Caco-2 (cell line): ENCODE measurements at regions of chr1 and their contacts with region 1.

Region 1: GRCh38 chr1:32072622-32073298 is at the start of gene TMEM39B:
- DNase-seq: peak; percentile 88 to 89
- H3K4me3 ChIP-seq: peak within 1 kb of the TSS; percentile 79
- H3K4me3 Mint-ChIP-seq: peak within 1 kb of the TSS; percentile 88
- H3K27ac Mint-ChIP-seq: peak within 1 kb of the TSS; percentile 76
- H3K4me1 ChIP-seq: no peaks in the 10 kb centered on the region
- H3K4me1 Mint-ChIP-seq: peaks cover 16% of the 10 kb centered on the region
- H3K27me3 ChIP-seq: no peaks in the 10 kb centered on the region
- H3K27me3 Mint-ChIP-seq: no peaks in the 10 kb centered on the region
- CTCF ChIP-seq: peak in 1 of 2 experiments; percentile 13
- total RNA-seq, gene TMEM39B: 9.8 and 12.1 TPM in 2 replicates

Region 2: DNA sequence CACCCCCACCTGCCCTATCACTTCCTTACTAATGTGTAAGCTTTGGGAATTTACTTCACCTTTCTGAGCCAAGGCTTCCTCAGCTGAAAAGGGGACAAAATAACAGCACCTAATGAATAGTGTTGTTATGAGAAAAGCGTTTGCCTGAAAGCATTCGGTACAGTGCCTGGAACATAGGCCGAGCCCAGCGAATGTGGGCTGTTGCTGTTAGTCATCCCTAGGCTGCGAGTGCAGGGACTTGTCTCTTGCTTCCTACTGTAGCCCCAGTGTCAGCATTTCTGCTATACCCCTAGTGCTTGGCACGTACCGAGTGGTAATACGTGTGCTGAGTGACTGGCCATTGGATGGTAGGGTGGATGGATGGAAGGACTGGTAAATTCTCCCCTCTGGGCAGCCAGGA is 18.4 kb after region 1 on chr1:
- CTCF ChIA-PET with region 1: no interaction called
- POLR2A ChIA-PET with region 1: no interaction called
- intact Hi-C with region 1: no loop called
- DNase-seq: no peak
- H3K4me3 ChIP-seq: no peak overlapping the region
- H3K4me3 Mint-ChIP-seq: no peak overlapping the region
- H3K27ac Mint-ChIP-seq: no peak overlapping the region
- H3K4me1 ChIP-seq: no peaks in the 10 kb centered on the region
- H3K4me1 Mint-ChIP-seq: no peaks in the 10 kb centered on the region
- H3K27me3 ChIP-seq: no peaks in the 10 kb centered on the region
- H3K27me3 Mint-ChIP-seq: no peaks in the 10 kb centered on the region
- CTCF ChIP-seq: no peak

Region 3: GRCh38 chr1:32107742-32108661 is 35.2 kb after region 1 on chr1 and contains the start of gene KPNA6:
- CTCF ChIA-PET with region 1: interaction called, 5 read pairs
- POLR2A ChIA-PET with region 1: interaction called, 8 read pairs
- intact Hi-C with region 1: loop called (anchors 2 kb)
- DNase-seq: peak; percentile 87 to 92
- H3K4me3 ChIP-seq: peak within 1 kb of the TSS; percentile 63
- H3K4me3 Mint-ChIP-seq: peak within 1 kb of the TSS; percentile 97
- H3K27ac Mint-ChIP-seq: peak within 1 kb of the TSS; percentile 90
- H3K4me1 ChIP-seq: peaks cover 10% of the 10 kb centered on the region
- H3K4me1 Mint-ChIP-seq: peaks cover 10% of the 10 kb centered on the region
- H3K27me3 ChIP-seq: no peaks in the 10 kb centered on the region
- H3K27me3 Mint-ChIP-seq: no peaks in the 10 kb centered on the region
- CTCF ChIP-seq: no peak
- total RNA-seq, gene KPNA6: 49.8 and 52.8 TPM in 2 replicates